ENCODE measurements at regions of chr20 and their contacts with region 1.

Region 1: DNA sequence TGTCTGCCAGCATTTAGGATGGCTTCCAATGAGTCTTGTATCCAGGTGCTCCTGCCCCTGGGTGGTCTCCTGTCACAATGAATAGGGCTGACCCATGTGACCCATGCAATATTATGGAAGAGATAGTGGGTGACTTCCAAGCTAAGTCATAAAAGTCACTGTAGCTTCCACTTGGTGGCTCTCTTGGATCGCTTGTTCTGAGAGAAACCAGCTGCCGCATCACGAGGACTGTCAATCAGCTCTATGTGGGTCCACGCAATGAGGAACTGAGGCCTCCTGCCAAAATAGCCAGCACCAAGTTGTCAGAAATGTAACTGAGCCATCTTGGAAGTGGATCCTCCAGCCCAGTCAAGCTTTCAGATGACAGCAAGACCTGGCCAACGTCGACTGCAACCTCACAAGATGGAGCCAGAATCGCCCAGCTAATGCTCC is 14.9 kb upstream of the MATN4 start:
- DNase-seq: peak; percentile 44
- H3K4me3 ChIP-seq: no peak overlapping the region
- H3K27ac ChIP-seq: peak overlapping the region; percentile 29
- H3K4me1 ChIP-seq: no peaks in the 10 kb centered on the region
- H3K27me3 ChIP-seq: peaks cover 4% of the 10 kb centered on the region
- CTCF ChIP-seq: peak; percentile 61

Region 2: GRCh38 chr20:45436732-45437391 is 113.9 kb after region 1 on chr20:
- intact Hi-C with region 1: loop called (anchors 5 kb)
- DNase-seq: peak; percentile 91
- H3K4me3 ChIP-seq: peak overlapping the region; percentile 70
- H3K27ac ChIP-seq: peak overlapping the region; percentile 83
- H3K4me1 ChIP-seq: peaks cover 19% of the 10 kb centered on the region
- H3K27me3 ChIP-seq: no peaks in the 10 kb centered on the region
- CTCF ChIP-seq: peak; percentile 99

Region 3: GRCh38 chr20:45771182-45771759 is 448.3 kb after region 1 on chr20:
- intact Hi-C with region 1: loop called (anchors 5 kb)
- DNase-seq: peak; percentile 71
- H3K4me3 ChIP-seq: no peak overlapping the region
- H3K27ac ChIP-seq: peak overlapping the region; percentile 30
- H3K4me1 ChIP-seq: peaks cover 9% of the 10 kb centered on the region
- H3K27me3 ChIP-seq: no peaks in the 10 kb centered on the region
- CTCF ChIP-seq: peak; percentile 97